Endothelial cell of umbilical vein (primary cell): ENCODE measurements at regions of chr1 and their contacts with region 1.

Region 1: GRCh38 chr1:92784639-92785500 is at the start of gene EVI5:
- DNase-seq: peak; percentile 99
- H3K4me3 ChIP-seq: peak within 1 kb of the TSS; percentile 73 to 88 (median 77)
- H3K27ac ChIP-seq: peak within 1 kb of the TSS; percentile 97
- H3K4me1 ChIP-seq: peaks cover 3% of the 10 kb centered on the region
- H3K27me3 ChIP-seq: no peaks in the 10 kb centered on the region
- CTCF ChIP-seq: no peak
- POLR2A ChIP-seq: peak; percentile 78
- total RNA-seq, gene EVI5: 26.2 and 34.4 TPM in 2 replicates

Region 2: GRCh38 chr1:92502247-92502646 is 282.6 kb before region 1 on chr1:
- CTCF ChIA-PET with region 1: no interaction called
- POLR2A ChIA-PET with region 1: no interaction called
- dilution Hi-C with region 1: no loop called
- intact Hi-C with region 1: no loop called
- DNase-seq: no peak
- H3K4me3 ChIP-seq: no peak overlapping the region
- H3K27ac ChIP-seq: no peak overlapping the region
- H3K4me1 ChIP-seq: no peaks in the 10 kb centered on the region
- H3K27me3 ChIP-seq: no peaks in the 10 kb centered on the region
- CTCF ChIP-seq: no peak
- POLR2A ChIP-seq: no peak

Region 3: DNA sequence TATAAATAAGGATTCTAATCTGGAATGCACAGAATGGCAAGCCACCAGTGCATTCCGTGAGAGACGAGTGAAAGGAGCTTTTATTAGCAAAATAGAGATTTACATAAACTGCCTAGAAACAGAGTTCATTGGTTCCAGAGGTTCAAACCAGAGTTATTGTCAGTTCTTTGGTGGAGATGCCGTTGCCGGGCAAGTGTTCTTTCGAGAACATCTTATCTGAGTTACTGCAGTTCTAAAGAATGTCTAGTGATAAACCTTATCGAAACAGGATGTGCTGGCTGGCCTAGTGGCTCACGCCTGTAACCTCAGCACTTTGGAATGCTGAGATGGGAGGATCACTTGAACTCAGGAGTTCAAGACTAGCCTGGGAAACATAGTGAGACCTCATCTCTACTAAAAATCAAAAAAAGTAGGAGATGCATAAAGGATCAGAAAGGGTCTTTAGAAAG is 19.9 kb after region 1 on chr1:
- CTCF ChIA-PET with region 1: interaction called, 5 read pairs
- POLR2A ChIA-PET with region 1: no interaction called
- dilution Hi-C with region 1: no loop called
- intact Hi-C with region 1: loop called (anchors 2 kb)
- DNase-seq: peak; percentile 97
- H3K4me3 ChIP-seq: no peak overlapping the region
- H3K27ac ChIP-seq: peak overlapping the region; percentile 94
- H3K4me1 ChIP-seq: peaks cover 15% of the 10 kb centered on the region
- H3K27me3 ChIP-seq: no peaks in the 10 kb centered on the region
- CTCF ChIP-seq: no peak
- POLR2A ChIP-seq: peak; percentile 55